ENCODE measurements at regions of chr12 and their contacts with region 1.

Region 1: GRCh38 chr12:93419388-93420034 is 22.2 kb downstream of the UBE2N start:
- DNase-seq: no peak
- H3K4me3 ChIP-seq: no peak overlapping the region
- CTCF ChIP-seq: peak; percentile 32

Region 2: DNA sequence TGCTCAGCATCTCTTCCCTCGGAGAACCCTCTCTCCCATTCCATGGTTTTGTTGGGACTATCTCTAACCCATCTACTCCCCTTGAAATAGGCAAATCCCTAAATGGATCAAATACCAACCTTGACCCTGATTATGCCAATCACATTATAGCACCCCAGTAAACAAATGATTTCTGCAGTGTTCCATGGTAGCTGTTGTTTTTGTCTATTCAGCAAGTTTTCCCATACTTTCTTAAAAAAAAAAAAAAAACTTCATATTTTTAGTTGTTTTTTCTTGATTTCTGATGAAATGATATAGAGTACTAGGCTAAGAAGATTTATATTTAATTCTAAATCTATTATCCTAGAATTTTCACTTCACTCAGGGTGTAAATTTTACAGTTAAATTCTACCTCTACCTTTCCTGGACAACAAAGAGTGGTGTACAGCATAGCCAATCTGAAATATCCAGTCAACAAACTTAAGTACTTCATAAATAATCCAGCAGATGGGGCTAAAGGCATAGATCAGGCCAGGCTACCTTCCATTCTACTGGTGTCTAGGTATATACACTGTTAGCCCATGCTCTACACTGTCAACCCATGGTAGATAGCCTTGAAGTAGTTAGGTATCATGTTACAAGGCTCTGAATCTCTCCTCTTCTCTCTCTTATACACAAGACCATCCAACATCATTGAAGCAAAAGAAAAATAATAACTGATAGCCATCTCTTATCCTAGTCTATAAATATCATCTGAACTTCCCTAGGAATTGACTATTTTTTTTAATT is 634.5 kb before region 1 on chr12:
- CTCF ChIA-PET with region 1: interaction called, 16 read pairs
- POLR2A ChIA-PET with region 1: no interaction called
- DNase-seq: peak; percentile 23
- H3K4me3 ChIP-seq: no peak overlapping the region
- CTCF ChIP-seq: peak; percentile 46

Region 3: DNA sequence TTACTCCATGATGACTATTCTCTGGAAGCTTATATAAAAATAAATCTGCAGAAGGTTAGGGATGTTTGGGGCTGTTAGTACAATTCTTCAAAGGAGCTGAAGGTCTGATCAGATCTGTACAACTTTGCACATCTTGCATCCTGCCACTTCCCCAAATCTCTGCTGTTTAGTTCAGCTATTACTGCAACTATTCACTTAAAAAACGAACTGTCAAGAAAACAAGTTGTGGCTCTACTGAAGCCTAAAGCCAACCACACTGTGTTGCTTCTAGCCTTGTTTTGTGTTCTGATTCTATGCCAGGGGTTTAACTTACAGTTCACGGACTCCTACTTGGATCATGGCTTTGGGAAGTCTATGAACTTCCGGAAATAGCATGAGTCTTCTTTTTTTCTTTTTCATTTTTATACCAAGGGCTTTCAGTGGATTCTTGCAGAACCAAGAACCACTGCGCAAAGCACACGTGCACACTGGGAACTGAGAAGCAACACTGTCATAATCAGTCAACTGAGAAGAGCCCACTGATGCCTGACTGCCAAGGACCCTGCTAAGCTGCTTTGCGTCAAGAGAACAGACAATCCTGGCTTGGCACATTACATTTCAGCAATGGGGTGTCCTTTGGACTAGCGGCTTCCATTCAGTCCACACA is 424.1 kb before region 1 on chr12:
- CTCF ChIA-PET with region 1: interaction called, 106 read pairs
- POLR2A ChIA-PET with region 1: no interaction called
- DNase-seq: no peak
- H3K4me3 ChIP-seq: no peak overlapping the region
- CTCF ChIP-seq: no peak

Region 4: DNA sequence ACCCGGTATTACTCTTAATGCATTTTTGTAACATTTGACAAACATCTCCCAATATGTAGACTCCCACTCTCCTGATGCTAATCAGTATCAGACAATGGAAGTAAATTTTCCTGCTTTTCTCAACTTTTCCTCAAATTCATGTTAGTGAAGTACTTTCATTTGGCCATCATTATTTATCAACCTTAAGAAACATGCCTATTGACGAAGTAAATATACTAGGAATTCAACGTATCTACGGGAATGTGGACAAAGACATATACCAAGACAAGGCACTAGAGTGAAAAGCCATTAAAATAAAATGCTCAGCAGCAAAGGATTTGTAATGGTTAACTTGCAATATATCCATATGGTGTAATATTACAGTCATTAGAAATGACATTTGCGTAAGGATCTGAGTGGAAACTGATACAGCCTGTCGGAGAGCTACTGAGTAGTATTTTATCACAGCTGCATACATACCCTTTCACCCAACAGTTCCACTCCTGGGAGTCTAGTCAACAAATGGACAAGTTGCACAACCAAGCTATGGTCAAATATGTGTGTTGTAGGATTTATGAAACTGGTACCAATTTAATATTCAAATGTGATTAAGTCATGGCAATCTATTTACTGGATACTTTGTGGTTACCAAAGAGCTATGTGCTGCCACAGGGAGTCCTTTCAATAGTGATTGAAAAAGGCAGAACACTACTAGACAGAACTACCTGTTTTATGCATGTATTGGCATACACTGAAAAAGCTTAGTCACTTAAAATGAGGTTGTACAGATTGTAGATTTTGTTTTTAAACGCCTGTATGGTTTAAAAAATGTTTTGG is 15.3 kb before region 1 on chr12:
- CTCF ChIA-PET with region 1: interaction called, 27 read pairs
- POLR2A ChIA-PET with region 1: no interaction called
- DNase-seq: no peak
- H3K4me3 ChIP-seq: no peak overlapping the region
- CTCF ChIP-seq: no peak

Region 5: GRCh38 chr12:93434256-93434865 is 14.8 kb after region 1 on chr12:
- CTCF ChIA-PET with region 1: interaction called, 63 read pairs
- POLR2A ChIA-PET with region 1: interaction called, 3 read pairs
- DNase-seq: no peak
- H3K4me3 ChIP-seq: no peak overlapping the region
- CTCF ChIP-seq: no peak